Activated CD8-positive, alpha-beta T cell treated with anti-CD3 and anti-CD28 coated beads for 36 hours (primary cell): ENCODE measurements at regions of chr15 and their contacts with region 1.

Region 1: GRCh38 chr15:90954712-90955671 is at the start of gene RCCD1:
- DNase-seq: peak; percentile 96
- ATAC-seq: peak; percentile 94
- H3K4me3 Mint-ChIP-seq: peak within 1 kb of the TSS; percentile 85
- H3K27ac Mint-ChIP-seq: peak within 1 kb of the TSS; percentile 94
- H3K4me1 Mint-ChIP-seq: peaks cover 5% of the 10 kb centered on the region
- H3K27me3 Mint-ChIP-seq: no peaks in the 10 kb centered on the region
- CTCF ChIP-seq: no peak
- total RNA-seq, gene RCCD1: 30.0 to 30.9 TPM

Region 2: DNA sequence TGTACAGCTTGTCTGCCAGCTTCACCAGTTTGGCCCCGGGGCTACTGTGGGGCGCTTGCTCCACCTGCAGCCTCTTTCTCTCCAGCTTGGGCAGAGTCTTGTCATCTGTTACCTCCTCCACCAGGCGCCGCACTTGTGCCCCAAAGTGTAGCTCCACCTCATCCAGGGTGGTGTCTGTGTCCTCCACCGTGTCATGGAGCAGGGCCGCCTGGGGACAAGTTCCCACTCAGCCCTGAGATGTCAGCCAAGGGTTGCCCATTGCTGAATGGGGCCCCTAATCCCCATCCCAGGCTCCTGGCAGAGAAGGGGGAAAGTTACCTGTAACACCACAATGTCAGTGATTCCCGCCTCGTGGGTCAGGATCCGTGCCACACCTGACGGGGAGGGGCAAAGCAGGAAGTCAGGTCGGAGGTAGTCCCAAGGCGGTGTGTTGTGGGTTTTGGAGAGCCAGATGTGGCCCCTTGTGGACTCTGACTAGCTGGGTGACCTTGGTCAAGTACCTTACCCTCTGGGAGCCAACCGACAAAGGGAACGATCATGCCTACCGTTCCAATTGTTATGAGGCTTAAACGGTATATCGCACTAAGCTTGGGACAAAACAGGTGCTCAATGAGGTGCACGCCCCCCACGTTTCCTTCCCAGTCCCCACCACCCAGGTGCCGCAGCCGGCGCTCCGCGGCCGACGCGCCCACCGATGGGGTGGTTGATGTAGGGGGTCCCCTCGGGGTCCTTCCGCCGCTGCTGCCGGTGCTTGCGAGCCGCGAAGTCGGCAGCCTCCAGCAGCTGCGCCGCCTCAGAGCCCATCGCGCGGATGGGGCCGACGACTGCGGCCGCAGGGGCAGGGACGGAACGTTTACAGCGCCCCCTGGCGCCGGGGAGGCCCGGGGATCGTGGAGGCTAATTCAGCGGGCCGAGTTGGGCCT is 23.0 kb before region 1 on chr15 and contains the start of gene HDDC3:
- CTCF ChIA-PET with region 1: interaction called, 178 read pairs
- POLR2A ChIA-PET with region 1: interaction called, 98 read pairs
- intact Hi-C with region 1: no loop called
- DNase-seq: peak; percentile 94
- ATAC-seq: peak; percentile 60
- H3K4me3 Mint-ChIP-seq: peak within 1 kb of the TSS; percentile 99
- H3K27ac Mint-ChIP-seq: peak within 1 kb of the TSS; percentile 99
- H3K4me1 Mint-ChIP-seq: peaks cover 36% of the 10 kb centered on the region
- H3K27me3 Mint-ChIP-seq: no peaks in the 10 kb centered on the region
- CTCF ChIP-seq: peak; percentile 96
- total RNA-seq, gene HDDC3: 34.2 to 35.6 TPM

Region 3: GRCh38 chr15:90982135-90982534 is 27.1 kb after region 1 on chr15:
- CTCF ChIA-PET with region 1: interaction called, 42 read pairs
- POLR2A ChIA-PET with region 1: interaction called, 7 read pairs
- intact Hi-C with region 1: no loop called
- DNase-seq: no peak
- ATAC-seq: no peak
- H3K4me3 Mint-ChIP-seq: no peak overlapping the region
- H3K27ac Mint-ChIP-seq: no peak overlapping the region
- H3K4me1 Mint-ChIP-seq: no peaks in the 10 kb centered on the region
- H3K27me3 Mint-ChIP-seq: no peaks in the 10 kb centered on the region
- CTCF ChIP-seq: no peak

Region 4: DNA sequence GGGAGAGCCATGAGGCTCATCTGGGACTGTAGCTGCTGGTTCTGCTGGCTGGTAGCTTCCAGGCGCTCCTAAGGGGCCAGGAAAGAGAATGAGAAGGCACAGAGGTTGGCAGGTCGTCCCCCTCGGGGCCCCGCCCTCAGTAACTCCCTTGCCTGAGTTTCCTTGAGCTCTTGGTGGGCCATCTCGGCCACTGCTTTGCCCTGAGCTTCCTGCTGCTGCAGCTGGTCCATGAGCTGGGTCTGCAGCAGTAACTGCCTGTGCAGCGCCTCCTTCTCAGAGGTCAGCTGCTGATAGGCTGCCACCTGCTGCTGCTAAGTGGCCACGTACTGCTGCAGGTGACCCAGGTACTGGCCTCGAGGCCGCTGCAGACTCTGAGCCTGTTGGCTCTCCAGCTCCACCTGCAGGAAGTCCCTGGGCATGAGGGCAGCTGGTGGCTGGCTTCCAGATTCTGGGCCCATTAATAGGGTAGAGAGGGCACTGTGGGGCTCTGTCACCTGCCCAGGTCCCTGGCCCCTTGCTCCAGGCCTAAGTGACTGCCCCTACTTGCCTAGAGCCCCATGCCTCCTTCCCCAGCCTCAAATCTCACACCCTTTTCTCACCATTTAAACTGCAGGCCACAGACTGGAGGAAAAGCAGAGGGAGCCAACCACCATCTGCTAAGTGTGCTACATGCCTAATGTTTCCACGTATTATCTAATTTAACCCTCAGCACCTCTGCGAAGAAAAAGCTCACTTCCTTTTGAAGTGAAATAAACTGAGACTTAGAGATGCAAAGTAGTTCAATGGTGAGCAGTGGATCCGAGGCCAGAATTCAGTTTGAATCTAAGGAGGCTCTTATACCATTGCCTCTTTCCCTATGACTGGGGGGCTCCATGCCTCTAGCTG is 78.2 kb after region 1 on chr15:
- CTCF ChIA-PET with region 1: interaction called, 30 read pairs
- POLR2A ChIA-PET with region 1: interaction called, 4 read pairs
- intact Hi-C with region 1: no loop called
- DNase-seq: peak; percentile 76
- ATAC-seq: peak; percentile 89
- H3K4me3 Mint-ChIP-seq: no peak overlapping the region
- H3K27ac Mint-ChIP-seq: no peak overlapping the region
- H3K4me1 Mint-ChIP-seq: no peaks in the 10 kb centered on the region
- H3K27me3 Mint-ChIP-seq: no peaks in the 10 kb centered on the region
- CTCF ChIP-seq: peak; percentile 61

Region 5: DNA sequence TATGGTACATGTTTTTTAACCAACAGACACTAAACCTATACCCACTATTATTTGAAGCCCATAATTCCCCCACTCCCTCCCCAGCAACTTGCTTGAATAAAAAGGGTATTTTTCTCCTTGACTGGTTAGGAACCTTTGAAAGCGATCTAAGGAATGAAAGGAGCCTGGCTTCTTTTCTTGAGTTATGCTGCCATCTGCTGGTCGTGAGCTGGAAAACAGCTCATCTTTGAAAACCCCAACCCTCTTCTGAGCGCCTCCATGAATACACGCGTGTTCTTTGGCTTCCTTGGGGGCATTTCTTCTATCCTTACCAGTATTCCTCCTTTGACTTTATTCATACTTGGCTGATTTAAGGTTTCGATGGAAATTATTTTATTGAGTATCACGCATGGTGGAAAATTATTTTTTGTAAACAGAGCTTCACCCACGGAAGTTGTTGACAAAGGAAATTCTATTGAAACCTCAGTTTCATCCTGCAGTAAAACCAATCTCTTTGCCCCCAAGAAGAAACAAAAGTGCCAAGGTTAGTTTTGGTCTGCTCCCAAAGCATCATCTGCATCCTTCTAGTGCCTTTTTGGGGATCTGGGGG is 316.7 kb after region 1 on chr15:
- CTCF ChIA-PET with region 1: interaction called, 20 read pairs
- POLR2A ChIA-PET with region 1: no interaction called
- intact Hi-C with region 1: loop called (anchors 5 kb)
- DNase-seq: peak; percentile 66
- ATAC-seq: peak; percentile 67
- H3K4me3 Mint-ChIP-seq: peak overlapping the region; percentile 13
- H3K27ac Mint-ChIP-seq: no peak overlapping the region
- H3K4me1 Mint-ChIP-seq: no peaks in the 10 kb centered on the region
- H3K27me3 Mint-ChIP-seq: peaks cover 20% of the 10 kb centered on the region
- CTCF ChIP-seq: peak; percentile 80